ENCODE measurements at regions of chr9 and their contacts with region 1.

Region 1: GRCh38 chr9:87950765-87951488 is 23.4 kb downstream of the CDK20 start:
- DNase-seq: peak; percentile 26 to 61 (median 59)
- H3K4me3 ChIP-seq: no peak overlapping the region
- H3K27ac ChIP-seq: no peak overlapping the region
- H3K4me1 ChIP-seq: no peaks in the 10 kb centered on the region
- H3K27me3 ChIP-seq: peaks cover 0 to 15% (median 3%) of the 10 kb centered on the region in 5 experiments

Region 2: DNA sequence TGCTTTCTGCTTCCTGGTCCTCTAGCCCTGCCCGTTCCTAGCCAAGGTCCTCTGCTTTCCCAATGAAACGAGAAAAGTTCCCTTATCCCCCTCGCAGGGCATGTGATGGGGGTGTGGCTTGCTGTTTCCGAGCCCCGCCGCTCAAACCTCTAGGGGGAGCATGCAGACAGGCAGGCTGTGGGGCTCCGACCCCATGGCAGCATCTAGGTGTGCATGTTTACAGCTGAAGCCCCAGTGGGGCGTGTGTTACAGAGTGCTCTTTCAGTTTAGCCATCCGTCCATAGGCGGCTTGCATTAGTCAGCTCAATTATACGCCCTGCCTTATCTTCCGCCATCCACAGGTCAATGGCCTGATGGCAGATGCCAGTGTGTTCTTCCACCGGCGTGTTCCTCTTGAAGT is 116.6 kb before region 1 on chr9:
- CTCF ChIA-PET with region 1: no interaction called
- POLR2A ChIA-PET with region 1: no interaction called
- DNase-seq: peak in 2 of 3 donors; percentile 17 to 43
- H3K4me3 ChIP-seq: no peak overlapping the region
- H3K27ac ChIP-seq: no peak overlapping the region
- H3K4me1 ChIP-seq: no peaks in the 10 kb centered on the region
- H3K27me3 ChIP-seq: peaks cover 0 to 5% (median 1%) of the 10 kb centered on the region in 5 experiments

Region 3: GRCh38 chr9:87968155-87968554 is 17.2 kb after region 1 on chr9:
- CTCF ChIA-PET with region 1: interaction called, 18 read pairs
- POLR2A ChIA-PET with region 1: no interaction called
- DNase-seq: no peak
- H3K4me3 ChIP-seq: no peak overlapping the region
- H3K27ac ChIP-seq: no peak overlapping the region
- H3K4me1 ChIP-seq: no peaks in the 10 kb centered on the region
- H3K27me3 ChIP-seq: peaks cover 0 to 3% (median 0%) of the 10 kb centered on the region in 5 experiments

Region 4: DNA sequence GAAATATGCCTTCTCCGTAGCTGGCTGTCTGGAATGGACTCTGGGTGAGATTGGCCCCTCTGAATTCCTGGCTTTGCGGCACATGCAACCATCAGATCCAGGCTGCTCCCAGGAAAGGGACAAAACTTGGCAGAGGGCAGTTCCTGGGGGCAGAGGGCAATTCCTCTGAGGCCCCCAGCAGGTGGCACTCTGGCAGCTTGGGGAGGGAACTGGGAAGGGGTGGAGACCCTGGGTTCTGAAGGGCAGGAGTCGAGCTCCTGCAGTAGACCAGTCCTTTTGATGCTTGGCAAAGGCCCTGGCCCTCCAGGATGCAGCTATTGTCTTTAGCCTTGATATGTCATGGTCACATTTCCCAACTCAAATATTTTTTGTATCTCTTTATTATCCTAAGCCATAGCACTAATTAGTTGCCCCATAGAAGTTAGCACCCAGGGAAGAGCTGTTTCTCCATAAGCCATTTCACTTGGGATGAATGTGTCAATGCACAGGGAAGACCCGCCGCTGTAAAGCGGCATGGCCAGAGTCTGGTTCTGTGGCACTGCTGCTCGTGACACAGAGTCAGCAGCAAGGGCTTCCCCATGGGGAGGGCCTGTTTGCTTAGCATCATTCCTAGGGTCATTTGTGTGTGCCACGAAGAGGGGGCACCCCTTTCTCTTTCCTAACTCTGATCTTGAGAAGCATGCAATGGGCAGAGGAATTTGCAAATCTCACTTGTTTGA is 74.6 kb after region 1 on chr9:
- CTCF ChIA-PET with region 1: no interaction called
- POLR2A ChIA-PET with region 1: no interaction called
- DNase-seq: no peak
- H3K4me3 ChIP-seq: no peak overlapping the region
- H3K27ac ChIP-seq: no peak overlapping the region
- H3K4me1 ChIP-seq: no peaks in the 10 kb centered on the region
- H3K27me3 ChIP-seq: no peaks in the 10 kb centered on the region

Measured in common myeloid progenitor, CD34-positive (primary cell).